Activated CD8-positive, alpha-beta T cell treated with anti-CD3 and anti-CD28 coated beads, Interleukin-2, amount 10 ng/mL, durations not matched to agents 7 days and 5 days (primary cell): ENCODE measurements at regions of chr19 and their contacts with region 1.

Region 1: DNA sequence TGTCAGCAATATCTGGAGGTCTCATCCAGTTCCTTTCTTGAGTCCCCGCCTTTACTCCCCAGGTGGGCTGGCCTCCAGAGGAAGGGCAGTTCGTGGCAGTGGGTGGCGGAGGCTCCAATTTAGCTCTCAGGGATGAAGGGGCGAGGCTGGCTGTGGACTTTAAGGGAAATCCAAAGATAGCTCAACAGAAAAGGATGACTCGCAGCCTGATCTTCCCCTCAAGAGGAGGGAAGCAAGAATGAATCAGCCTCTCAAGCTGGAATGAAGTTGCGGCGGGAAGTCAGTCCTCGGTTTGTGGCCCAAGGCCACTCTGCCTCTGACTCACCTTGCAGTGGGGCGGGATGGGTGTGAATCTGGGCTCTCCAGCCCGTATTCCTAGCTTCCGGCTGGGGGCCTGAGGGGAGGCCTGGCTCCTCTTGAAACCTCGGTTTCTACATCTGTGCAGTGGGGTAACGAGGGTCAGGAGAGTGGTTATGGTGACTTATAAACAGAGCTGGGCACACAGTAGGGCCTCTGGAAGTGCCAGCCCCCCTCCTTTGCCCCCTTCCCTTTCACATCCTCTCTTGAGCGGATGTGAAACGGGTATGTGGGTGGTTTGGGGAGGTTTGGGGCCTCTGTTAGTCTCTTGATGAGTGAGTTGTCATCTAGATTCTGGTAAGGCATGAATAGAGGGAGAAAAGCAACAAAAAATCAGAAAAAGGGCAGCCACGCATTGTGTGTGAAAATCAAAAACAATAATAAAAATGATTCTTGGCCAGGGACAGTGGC is 10.5 kb upstream of the SMG9 start:
- DNase-seq: peak; percentile 86
- ATAC-seq: peak; percentile 83
- H3K4me3 Mint-ChIP-seq: peak overlapping the region; percentile 49
- H3K27ac Mint-ChIP-seq: peak overlapping the region; percentile 93
- H3K4me1 Mint-ChIP-seq: peaks cover 56% of the 10 kb centered on the region
- H3K27me3 Mint-ChIP-seq: no peaks in the 10 kb centered on the region

Region 2: DNA sequence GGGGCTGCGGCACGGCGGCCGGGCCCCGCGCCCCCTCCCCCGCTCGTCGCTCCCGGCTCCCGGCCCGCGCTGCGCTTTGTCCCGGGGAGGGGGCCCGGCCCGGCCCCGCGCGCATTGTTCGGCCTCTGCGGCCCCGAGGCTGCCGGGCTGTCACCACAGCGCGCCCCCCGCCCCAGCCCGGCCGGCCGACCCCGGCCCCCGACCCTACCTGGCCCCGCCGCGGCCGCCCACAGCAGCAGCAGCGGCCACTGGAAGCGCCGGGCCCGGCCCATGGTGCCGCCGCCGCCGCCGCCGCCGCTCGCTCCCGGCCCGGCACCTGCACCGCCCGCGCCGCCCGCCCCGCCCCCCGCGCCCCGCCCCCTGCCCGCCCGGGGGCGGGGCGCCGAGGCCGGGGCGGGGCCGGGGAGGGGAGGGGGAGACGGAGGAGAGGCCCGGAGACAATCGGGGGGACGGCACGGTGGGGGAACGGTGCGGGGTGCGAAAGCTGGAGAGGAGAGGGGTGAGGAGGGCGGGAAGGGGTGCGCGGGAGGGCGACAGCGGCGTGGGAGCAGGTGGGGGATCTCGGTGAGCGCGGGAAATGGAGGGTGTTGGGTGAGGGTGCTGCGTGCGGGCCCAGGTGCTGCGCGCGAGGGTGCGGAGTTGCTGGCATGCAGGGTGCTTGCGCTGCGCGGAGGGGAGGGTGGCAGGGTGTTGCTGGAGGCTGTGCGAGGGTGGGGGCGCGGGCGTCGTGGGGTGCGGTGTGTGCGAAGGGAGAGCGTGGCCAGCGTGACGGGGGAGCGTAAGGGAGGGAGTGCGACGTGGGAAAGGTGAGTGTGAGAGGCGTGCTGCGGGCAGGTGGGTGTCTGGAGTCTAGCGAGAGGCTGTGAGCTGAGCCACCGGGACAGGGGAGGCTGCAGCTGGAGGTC is 125.5 kb before region 1 on chr19 and contains the start of gene CADM4:
- CTCF ChIA-PET with region 1: no interaction called
- POLR2A ChIA-PET with region 1: no interaction called
- DNase-seq: peak; percentile 48
- ATAC-seq: peak; percentile 84
- H3K4me3 Mint-ChIP-seq: peak within 1 kb of the TSS; percentile 70
- H3K27ac Mint-ChIP-seq: peak within 1 kb of the TSS; percentile 11
- H3K4me1 Mint-ChIP-seq: peaks cover 17% of the 10 kb centered on the region
- H3K27me3 Mint-ChIP-seq: peaks cover 55% of the 10 kb centered on the region
- total RNA-seq, gene CADM4: 0.10 to 0.40 TPM

Region 3: GRCh38 chr19:43687660-43687997 is 77.7 kb before region 1 on chr19:
- CTCF ChIA-PET with region 1: no interaction called
- POLR2A ChIA-PET with region 1: no interaction called
- DNase-seq: no peak
- ATAC-seq: no peak
- H3K4me3 Mint-ChIP-seq: no peak overlapping the region
- H3K27ac Mint-ChIP-seq: no peak overlapping the region
- H3K4me1 Mint-ChIP-seq: no peaks in the 10 kb centered on the region
- H3K27me3 Mint-ChIP-seq: peaks cover 7% of the 10 kb centered on the region

Region 4: DNA sequence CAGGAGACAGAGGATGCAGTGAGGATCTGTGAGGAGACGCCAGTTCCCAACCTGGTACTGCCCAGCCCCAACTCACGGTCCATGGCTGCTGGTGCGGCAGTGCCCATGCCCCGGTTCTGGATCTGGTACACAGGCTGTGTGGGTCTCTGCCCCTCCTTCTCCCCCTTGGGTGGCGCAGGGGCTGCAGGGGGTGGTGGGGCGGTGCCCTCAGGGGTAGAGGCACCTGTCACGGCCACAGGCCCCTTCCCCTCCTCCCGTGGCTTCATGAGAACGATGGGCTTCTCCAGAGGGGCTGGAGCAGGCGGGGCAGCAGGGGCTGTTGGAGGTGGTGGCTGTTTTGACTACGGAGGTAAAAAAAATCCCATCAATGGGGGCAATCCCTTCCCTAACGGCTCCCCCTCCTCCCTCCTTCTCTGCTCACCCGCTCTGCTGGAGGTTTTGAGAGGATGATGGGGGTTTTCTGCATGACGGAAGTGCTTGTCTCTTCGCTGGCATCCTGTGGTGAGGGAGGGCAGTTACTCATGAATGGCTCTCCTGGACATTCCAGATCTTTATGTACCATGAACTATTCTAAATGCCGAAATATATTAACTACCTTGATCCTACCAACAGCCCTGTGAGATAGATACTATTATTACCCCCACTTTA is 17.6 kb before region 1 on chr19:
- CTCF ChIA-PET with region 1: interaction called, 103 read pairs
- POLR2A ChIA-PET with region 1: interaction called, 103 read pairs
- DNase-seq: no peak
- ATAC-seq: no peak
- H3K4me3 Mint-ChIP-seq: no peak overlapping the region
- H3K27ac Mint-ChIP-seq: peak overlapping the region; percentile 50
- H3K4me1 Mint-ChIP-seq: peaks cover 16% of the 10 kb centered on the region
- H3K27me3 Mint-ChIP-seq: no peaks in the 10 kb centered on the region

Region 5: GRCh38 chr19:43754503-43755255 is 10.6 kb before region 1 on chr19 and contains the start of gene SMG9:
- CTCF ChIA-PET with region 1: interaction called, 103 read pairs
- POLR2A ChIA-PET with region 1: interaction called, 103 read pairs
- DNase-seq: peak; percentile 98
- ATAC-seq: peak; percentile 89
- H3K4me3 Mint-ChIP-seq: peak within 1 kb of the TSS; percentile 98
- H3K27ac Mint-ChIP-seq: peak within 1 kb of the TSS; percentile 99
- H3K4me1 Mint-ChIP-seq: peaks cover 50% of the 10 kb centered on the region
- H3K27me3 Mint-ChIP-seq: no peaks in the 10 kb centered on the region
- total RNA-seq, gene SMG9: 60.0 to 65.1 TPM

Region 6: GRCh38 chr19:43777163-43777700 is 11.9 kb after region 1 on chr19:
- CTCF ChIA-PET with region 1: interaction called, 139 read pairs
- POLR2A ChIA-PET with region 1: interaction called, 18 read pairs
- DNase-seq: peak; percentile 37
- ATAC-seq: peak; percentile 28
- H3K4me3 Mint-ChIP-seq: peak overlapping the region; percentile 61
- H3K27ac Mint-ChIP-seq: peak overlapping the region; percentile 91
- H3K4me1 Mint-ChIP-seq: peaks cover 55% of the 10 kb centered on the region
- H3K27me3 Mint-ChIP-seq: no peaks in the 10 kb centered on the region

Region 7: DNA sequence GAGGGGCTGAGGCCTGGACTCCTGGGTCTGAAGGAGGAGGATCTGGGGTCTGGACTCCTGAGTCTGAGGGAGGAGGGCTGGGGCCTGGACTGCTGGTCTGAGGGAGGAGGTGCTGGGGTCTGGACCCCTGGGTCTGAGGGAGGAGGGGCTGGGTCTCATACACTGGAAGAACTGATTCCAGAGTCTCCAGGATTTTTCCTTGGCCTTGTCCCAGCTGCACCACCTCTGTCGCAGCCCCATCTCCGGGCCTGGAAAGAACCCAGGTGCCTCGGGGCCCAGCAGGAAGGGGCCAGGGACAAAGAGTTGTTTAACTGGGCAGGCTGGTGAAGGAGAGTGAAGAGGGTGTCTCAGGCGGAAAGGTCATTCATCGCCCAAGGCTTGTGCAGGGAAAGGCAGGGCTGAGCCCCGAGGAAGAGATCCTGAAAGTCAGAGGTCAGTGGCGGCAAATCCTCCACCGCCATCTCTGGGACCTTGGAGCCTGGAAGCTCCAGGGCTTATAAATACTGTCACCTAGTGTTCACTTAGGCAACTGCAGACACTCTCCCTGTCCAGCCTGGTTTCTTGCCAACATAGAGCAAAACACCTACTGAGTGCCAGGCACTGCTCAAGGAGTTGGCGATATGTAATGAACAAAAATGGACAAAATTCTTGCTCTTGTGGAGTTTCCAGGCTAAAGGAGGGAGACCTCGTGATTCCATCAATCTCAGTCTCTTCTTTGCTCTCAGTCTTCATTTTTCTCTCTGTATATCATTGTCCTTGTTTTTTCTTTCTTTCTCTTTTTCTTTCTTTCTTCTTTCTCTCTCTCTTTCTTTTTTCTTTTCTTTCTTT is 19.9 kb after region 1 on chr19:
- CTCF ChIA-PET with region 1: interaction called, 139 read pairs
- POLR2A ChIA-PET with region 1: interaction called, 18 read pairs
- DNase-seq: peak; percentile 75
- ATAC-seq: peak; percentile 55
- H3K4me3 Mint-ChIP-seq: peak overlapping the region; percentile 16
- H3K27ac Mint-ChIP-seq: peak overlapping the region; percentile 89
- H3K4me1 Mint-ChIP-seq: peaks cover 43% of the 10 kb centered on the region
- H3K27me3 Mint-ChIP-seq: no peaks in the 10 kb centered on the region

Region 8: DNA sequence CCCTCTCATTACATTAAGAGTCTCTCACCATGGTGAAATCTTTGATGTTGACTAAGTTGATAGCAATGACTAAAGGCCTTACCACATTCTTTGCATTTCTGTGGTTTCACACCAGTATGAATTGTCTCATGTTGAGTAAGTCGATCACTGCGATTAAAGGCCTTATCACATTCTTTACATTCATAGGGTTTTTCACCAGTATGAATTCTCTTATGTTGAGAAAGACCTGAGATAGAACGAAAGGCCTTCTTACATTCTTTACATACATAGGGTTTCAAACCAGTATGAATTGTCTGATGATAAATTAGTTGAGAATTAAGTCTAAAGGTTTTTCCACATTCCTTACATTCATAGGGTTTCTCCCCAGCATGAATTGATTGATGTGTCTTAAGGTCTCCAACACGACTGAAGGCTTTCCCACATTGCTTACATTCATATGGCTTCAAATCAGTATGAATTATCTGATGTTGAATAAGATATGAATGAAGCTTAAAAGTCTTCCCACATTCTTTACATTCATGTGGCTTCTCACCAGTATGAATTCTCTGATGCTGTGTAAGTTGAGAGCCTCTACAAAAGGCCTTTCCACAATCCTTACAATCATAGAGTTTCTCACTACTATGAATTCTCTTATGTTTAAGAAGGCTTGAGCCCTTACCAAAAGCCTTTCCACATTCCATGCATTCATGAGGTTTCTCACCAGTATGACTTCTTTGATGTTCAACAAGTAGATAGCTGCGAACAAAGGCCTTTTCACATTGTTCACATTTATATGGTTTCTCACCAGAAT is 107.4 kb after region 1 on chr19:
- CTCF ChIA-PET with region 1: no interaction called
- POLR2A ChIA-PET with region 1: no interaction called
- DNase-seq: no peak
- ATAC-seq: no peak
- H3K4me3 Mint-ChIP-seq: no peak overlapping the region
- H3K27ac Mint-ChIP-seq: no peak overlapping the region
- H3K4me1 Mint-ChIP-seq: no peaks in the 10 kb centered on the region
- H3K27me3 Mint-ChIP-seq: no peaks in the 10 kb centered on the region

Region 9: GRCh38 chr19:44107751-44108150 is 342.5 kb after region 1 on chr19:
- CTCF ChIA-PET with region 1: no interaction called
- POLR2A ChIA-PET with region 1: no interaction called
- DNase-seq: no peak
- ATAC-seq: no peak
- H3K4me3 Mint-ChIP-seq: no peak overlapping the region
- H3K27ac Mint-ChIP-seq: no peak overlapping the region
- H3K4me1 Mint-ChIP-seq: peaks cover 9% of the 10 kb centered on the region
- H3K27me3 Mint-ChIP-seq: no peaks in the 10 kb centered on the region